ENCODE measurements at regions of chr10 and their contacts with region 1.

Region 1: GRCh38 chr10:112753961-112754411 is 196.1 kb upstream of the TCF7L2 start:
- DNase-seq: no peak
- ATAC-seq: no peak
- H3K4me3 ChIP-seq: no peak overlapping the region
- H3K27ac ChIP-seq: peak overlapping the region; percentile 9
- H3K4me1 ChIP-seq: peaks cover 77% of the 10 kb centered on the region
- H3K27me3 ChIP-seq: no peaks in the 10 kb centered on the region
- CTCF ChIP-seq: no peak
- EP300 ChIP-seq: no peak
- POLR2A ChIP-seq: no peak
- RAD21 ChIP-seq: no peak

Region 2: GRCh38 chr10:112532189-112532588 is 221.8 kb before region 1 on chr10:
- CTCF ChIA-PET with region 1: no interaction called
- POLR2A ChIA-PET with region 1: no interaction called
- in situ Hi-C with region 1: no loop called
- intact Hi-C with region 1: no loop called
- DNase-seq: no peak
- ATAC-seq: no peak
- H3K4me3 ChIP-seq: no peak overlapping the region
- H3K27ac ChIP-seq: no peak overlapping the region
- H3K4me1 ChIP-seq: peaks cover 13% of the 10 kb centered on the region
- H3K27me3 ChIP-seq: no peaks in the 10 kb centered on the region
- CTCF ChIP-seq: no peak
- EP300 ChIP-seq: no peak
- POLR2A ChIP-seq: no peak
- RAD21 ChIP-seq: no peak

Region 3: GRCh38 chr10:112689299-112690072 is 64.5 kb before region 1 on chr10:
- CTCF ChIA-PET with region 1: no interaction called
- POLR2A ChIA-PET with region 1: no interaction called
- in situ Hi-C with region 1: no loop called
- intact Hi-C with region 1: loop called (anchors 2 kb)
- DNase-seq: peak; percentile 16
- ATAC-seq: peak; percentile 74
- H3K4me3 ChIP-seq: no peak overlapping the region
- H3K27ac ChIP-seq: no peak overlapping the region
- H3K4me1 ChIP-seq: peaks cover 10% of the 10 kb centered on the region
- H3K27me3 ChIP-seq: no peaks in the 10 kb centered on the region
- CTCF ChIP-seq: peak; percentile 71
- EP300 ChIP-seq: no peak
- POLR2A ChIP-seq: no peak
- RAD21 ChIP-seq: peak; percentile 54; the same call in 1 of the 2 replicates

Region 4: DNA sequence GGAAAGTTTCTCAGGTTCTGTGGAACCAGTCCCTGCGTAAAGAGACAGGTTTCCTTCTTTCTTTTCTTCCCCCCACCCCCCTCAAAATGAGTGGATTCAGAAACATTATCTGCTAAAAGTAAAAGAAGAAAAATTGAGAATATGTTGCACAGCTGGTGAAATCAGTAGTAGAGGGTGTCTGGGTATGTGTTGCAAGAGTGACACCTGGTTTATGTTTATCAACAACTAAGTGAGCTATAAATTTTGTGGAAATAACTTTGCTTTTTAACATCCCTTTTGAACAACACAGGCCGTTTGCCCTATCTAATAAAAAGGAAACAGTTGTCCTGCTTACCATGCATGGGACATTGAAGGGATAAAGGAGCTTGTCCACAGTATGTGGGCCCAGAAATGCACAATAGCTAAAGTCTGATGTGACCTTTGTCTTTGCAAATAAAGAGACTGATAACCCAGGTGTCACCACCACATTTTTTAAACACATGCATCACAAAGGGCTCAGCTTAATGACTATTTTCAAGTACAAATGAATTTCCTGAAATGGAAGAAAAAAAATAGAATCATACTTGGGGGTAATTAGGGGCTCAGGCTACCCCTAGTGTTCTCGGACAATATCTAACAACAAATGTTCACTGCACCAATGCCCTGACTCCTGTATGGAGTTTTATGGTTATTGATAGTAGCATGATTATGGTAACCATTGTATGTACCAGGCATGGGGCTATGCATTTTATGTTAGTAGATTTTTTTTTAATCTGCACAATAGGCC is 25.7 kb before region 1 on chr10:
- CTCF ChIA-PET with region 1: no interaction called
- POLR2A ChIA-PET with region 1: interaction called, 10 read pairs
- in situ Hi-C with region 1: no loop called
- intact Hi-C with region 1: no loop called
- DNase-seq: peak; percentile 92
- ATAC-seq: peak; percentile 98
- H3K4me3 ChIP-seq: peak overlapping the region in 1 of 3 experiments; percentile 27; a peak in 1 of 6 replicates
- H3K27ac ChIP-seq: peak overlapping the region; percentile 86
- H3K4me1 ChIP-seq: peaks cover 86% of the 10 kb centered on the region
- H3K27me3 ChIP-seq: no peaks in the 10 kb centered on the region
- CTCF ChIP-seq: 0 out of 2 replicates have a peak, but pooled peaks have one; percentile 8
- EP300 ChIP-seq: peak in 1 of 2 experiments; percentile 94; a peak in 2 of 4 replicates
- POLR2A ChIP-seq: 0 out of 4 replicates have a peak, but pooled peaks of 1 of the 2 experiments have one; percentile 18
- RAD21 ChIP-seq: 0 out of 2 replicates have a peak, but pooled peaks have one; percentile 24

Region 5: DNA sequence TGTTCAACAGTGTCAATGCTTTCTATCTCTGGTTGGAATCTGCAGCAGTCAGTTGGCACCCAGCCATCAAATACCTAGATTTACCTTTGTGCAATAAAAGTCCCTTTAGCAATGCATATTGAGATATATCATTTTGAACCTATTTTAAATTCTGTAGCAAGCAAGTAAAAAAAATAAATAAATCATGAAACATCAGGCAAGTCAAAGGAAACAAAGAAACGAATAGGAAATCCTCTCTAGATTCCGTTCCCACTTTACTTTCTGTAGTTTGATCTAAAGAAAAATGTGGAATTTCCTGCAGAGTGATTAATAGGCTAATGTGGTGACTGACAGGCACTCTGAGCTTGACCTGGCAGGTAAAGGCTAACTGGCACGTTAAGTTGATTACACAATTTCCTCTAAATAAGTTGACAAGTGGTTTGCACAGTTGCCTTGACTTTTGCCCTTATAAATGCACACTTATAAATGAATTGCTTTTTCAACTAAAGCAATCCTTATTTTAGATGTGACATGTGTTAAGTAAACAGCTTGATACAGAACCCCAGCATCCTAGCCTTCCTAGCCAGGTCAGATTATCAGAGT is 12.1 kb before region 1 on chr10:
- CTCF ChIA-PET with region 1: no interaction called
- POLR2A ChIA-PET with region 1: interaction called, 12 read pairs
- in situ Hi-C with region 1: no loop called
- intact Hi-C with region 1: no loop called
- DNase-seq: peak; percentile 76
- ATAC-seq: no peak
- H3K4me3 ChIP-seq: no peak overlapping the region
- H3K27ac ChIP-seq: peak overlapping the region; percentile 92
- H3K4me1 ChIP-seq: peaks cover 86% of the 10 kb centered on the region
- H3K27me3 ChIP-seq: no peaks in the 10 kb centered on the region
- CTCF ChIP-seq: no peak
- EP300 ChIP-seq: peak in 1 of 2 experiments; percentile 87; a peak in 2 of 4 replicates
- POLR2A ChIP-seq: no peak
- RAD21 ChIP-seq: no peak

Region 6: GRCh38 chr10:113221756-113222168 is 467.8 kb after region 1 on chr10:
- CTCF ChIA-PET with region 1: no interaction called
- POLR2A ChIA-PET with region 1: no interaction called
- in situ Hi-C with region 1: no loop called
- intact Hi-C with region 1: no loop called
- DNase-seq: no peak
- ATAC-seq: no peak
- H3K4me3 ChIP-seq: no peak overlapping the region
- H3K27ac ChIP-seq: no peak overlapping the region
- H3K4me1 ChIP-seq: no peaks in the 10 kb centered on the region
- H3K27me3 ChIP-seq: peaks cover 0 to 32% of the 10 kb centered on the region in 2 experiments; a peak in 3 of 5 replicates
- CTCF ChIP-seq: no peak
- EP300 ChIP-seq: no peak
- POLR2A ChIP-seq: no peak
- RAD21 ChIP-seq: no peak